Heart right ventricle (tissue), 16 donors: ENCODE measurements at regions of chr1 and their contacts with region 1.

Region 1: DNA sequence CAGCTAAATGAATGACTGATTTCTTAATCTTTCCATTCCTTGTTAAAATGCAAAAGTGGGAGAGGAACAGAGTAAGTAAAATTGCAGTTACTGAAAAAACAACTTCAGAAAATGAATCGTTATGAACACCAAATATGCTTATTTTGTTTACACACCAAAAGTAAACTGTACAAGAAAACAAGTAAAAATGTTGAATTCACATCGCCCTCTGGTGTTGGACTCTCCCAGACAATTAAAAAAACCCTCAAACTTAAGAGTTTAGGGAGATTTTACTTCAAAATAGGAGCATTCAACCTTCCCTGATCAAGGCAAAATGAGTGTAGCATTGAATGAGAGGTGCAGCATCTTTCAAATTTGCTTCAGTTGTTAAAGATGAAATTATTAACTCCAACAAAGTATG is 19.4 kb upstream of the ESRRG start:
- DNase-seq: no peak
- ATAC-seq: no peak
- H3K4me3 ChIP-seq: no peak overlapping the region
- H3K27ac ChIP-seq: no peak overlapping the region
- H3K4me1 ChIP-seq: peaks cover 0 to 4% (median 0%) of the 10 kb centered on the region in 9 donors
- H3K27me3 ChIP-seq: no peaks in the 10 kb centered on the region
- CTCF ChIP-seq: peak in 7 of 9 donors; percentile 18 to 54 (median 36)

Region 2: DNA sequence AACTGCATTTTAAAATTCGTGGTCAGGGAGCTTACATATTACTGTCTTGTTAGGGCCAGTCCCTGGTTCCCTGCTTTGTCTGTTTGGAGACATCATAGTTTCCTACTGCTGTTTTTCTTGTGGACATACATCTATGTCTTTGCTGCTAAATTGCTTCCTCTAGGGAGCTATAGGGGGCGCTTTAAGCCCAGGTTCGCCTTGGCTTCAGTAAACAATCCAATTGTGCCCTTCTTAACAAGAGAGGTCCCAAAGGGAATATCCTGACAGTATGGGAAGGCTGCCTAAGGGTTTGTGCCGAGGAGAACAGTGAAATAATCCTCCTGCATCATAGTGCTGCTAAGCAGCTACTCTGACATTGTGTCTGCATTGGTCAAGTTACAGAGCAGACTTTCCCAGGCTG is 431.8 kb before region 1 on chr1:
- intact Hi-C with region 1: loop called in 1 of 10 experiments (anchors 5 kb)
- DNase-seq: peak in 1 of 2 donors; percentile 7
- ATAC-seq: peak in 1 of 8 donors; percentile 39
- H3K4me3 ChIP-seq: no peak overlapping the region
- H3K27ac ChIP-seq: no peak overlapping the region
- H3K4me1 ChIP-seq: no peaks in the 10 kb centered on the region
- H3K27me3 ChIP-seq: no peaks in the 10 kb centered on the region
- CTCF ChIP-seq: peak in 8 of 9 donors; percentile 8 to 56 (median 48)

Region 3: DNA sequence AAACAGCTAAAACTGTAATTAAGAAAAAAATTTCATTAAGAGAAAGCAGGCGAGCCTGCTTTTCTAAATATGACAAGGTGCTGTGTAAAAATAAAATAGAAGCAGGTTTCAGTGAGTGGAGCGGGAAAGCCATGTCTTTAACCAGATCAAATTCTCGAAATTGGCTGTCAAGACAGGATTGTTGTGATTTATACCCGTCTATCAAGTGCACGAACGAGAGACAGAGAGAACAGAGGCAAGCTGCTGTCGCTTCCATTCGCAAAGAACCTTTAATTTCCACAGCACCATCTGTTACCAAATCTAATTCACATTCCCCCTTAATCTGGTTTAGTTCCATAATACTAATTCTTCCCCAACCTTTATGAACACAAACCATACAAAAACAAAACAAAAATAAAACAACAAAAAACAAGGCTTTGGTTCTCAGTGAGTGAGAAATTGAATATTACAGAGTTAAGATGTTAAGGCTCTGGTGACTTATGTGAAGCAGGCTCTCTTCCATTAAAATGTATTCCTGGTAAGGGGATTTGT is 54.4 kb before region 1 on chr1:
- intact Hi-C with region 1: no loop called
- DNase-seq: no peak
- ATAC-seq: no peak
- H3K4me3 ChIP-seq: no peak overlapping the region
- H3K27ac ChIP-seq: no peak overlapping the region
- H3K4me1 ChIP-seq: peaks cover 0 to 16% (median 0%) of the 10 kb centered on the region in 9 donors
- H3K27me3 ChIP-seq: no peaks in the 10 kb centered on the region
- CTCF ChIP-seq: no peak

Region 4: GRCh38 chr1:216894494-216894893 is 151.9 kb after region 1 on chr1:
- intact Hi-C with region 1: loop called in 1 of 10 experiments (anchors 10 kb)
- DNase-seq: no peak
- ATAC-seq: peak in 1 of 8 donors; percentile 55
- H3K4me3 ChIP-seq: no peak overlapping the region
- H3K27ac ChIP-seq: no peak overlapping the region
- H3K4me1 ChIP-seq: peaks cover 0 to 17% (median 0%) of the 10 kb centered on the region in 9 donors
- H3K27me3 ChIP-seq: no peaks in the 10 kb centered on the region
- CTCF ChIP-seq: no peak

Region 5: GRCh38 chr1:217333939-217334338 is 591.3 kb after region 1 on chr1:
- intact Hi-C with region 1: loop called in 2 of 10 experiments (anchors 5 to 10 kb)
- DNase-seq: peak in 1 of 2 donors; percentile 5
- ATAC-seq: no peak
- H3K4me3 ChIP-seq: no peak overlapping the region
- H3K27ac ChIP-seq: no peak overlapping the region
- H3K4me1 ChIP-seq: peaks cover 0 to 13% (median 0%) of the 10 kb centered on the region in 9 donors
- H3K27me3 ChIP-seq: no peaks in the 10 kb centered on the region
- CTCF ChIP-seq: peak in 8 of 9 donors; percentile 13 to 55 (median 50)